Endothelial cell of umbilical vein (primary cell): ENCODE measurements at regions of chr1 and their contacts with region 1.

Region 1: GRCh38 chr1:111755331-111756123 is at the start of gene DDX20:
- DNase-seq: peak; percentile 96
- H3K4me3 ChIP-seq: peak within 1 kb of the TSS; percentile 80 to 91 (median 82)
- H3K27ac ChIP-seq: peak within 1 kb of the TSS; percentile 90
- H3K4me1 ChIP-seq: peaks cover 24% of the 10 kb centered on the region
- H3K27me3 ChIP-seq: no peaks in the 10 kb centered on the region
- CTCF ChIP-seq: peak; percentile 82 to 83
- POLR2A ChIP-seq: peak; percentile 95
- total RNA-seq, gene DDX20: 14.5 and 15.9 TPM in 2 replicates

Region 2: GRCh38 chr1:111448918-111449702 is 306.4 kb before region 1 on chr1 and contains the starts of genes ATP5PB and WDR77:
- CTCF ChIA-PET with region 1: no interaction called
- POLR2A ChIA-PET with region 1: no interaction called
- dilution Hi-C with region 1: no loop called
- intact Hi-C with region 1: loop called (anchors 1 kb)
- DNase-seq: peak; percentile 99
- H3K4me3 ChIP-seq: peak within 1 kb of the TSS; percentile 72 to 96 (median 87)
- H3K27ac ChIP-seq: peak within 1 kb of the TSS; percentile 74
- H3K4me1 ChIP-seq: peaks cover 21% of the 10 kb centered on the region
- H3K27me3 ChIP-seq: no peaks in the 10 kb centered on the region
- CTCF ChIP-seq: no peak
- POLR2A ChIP-seq: peak; percentile 60
- total RNA-seq, gene ATP5PB: 235 and 244 TPM in 2 replicates
- total RNA-seq, gene WDR77: 35.6 and 41.3 TPM in 2 replicates

Region 3: DNA sequence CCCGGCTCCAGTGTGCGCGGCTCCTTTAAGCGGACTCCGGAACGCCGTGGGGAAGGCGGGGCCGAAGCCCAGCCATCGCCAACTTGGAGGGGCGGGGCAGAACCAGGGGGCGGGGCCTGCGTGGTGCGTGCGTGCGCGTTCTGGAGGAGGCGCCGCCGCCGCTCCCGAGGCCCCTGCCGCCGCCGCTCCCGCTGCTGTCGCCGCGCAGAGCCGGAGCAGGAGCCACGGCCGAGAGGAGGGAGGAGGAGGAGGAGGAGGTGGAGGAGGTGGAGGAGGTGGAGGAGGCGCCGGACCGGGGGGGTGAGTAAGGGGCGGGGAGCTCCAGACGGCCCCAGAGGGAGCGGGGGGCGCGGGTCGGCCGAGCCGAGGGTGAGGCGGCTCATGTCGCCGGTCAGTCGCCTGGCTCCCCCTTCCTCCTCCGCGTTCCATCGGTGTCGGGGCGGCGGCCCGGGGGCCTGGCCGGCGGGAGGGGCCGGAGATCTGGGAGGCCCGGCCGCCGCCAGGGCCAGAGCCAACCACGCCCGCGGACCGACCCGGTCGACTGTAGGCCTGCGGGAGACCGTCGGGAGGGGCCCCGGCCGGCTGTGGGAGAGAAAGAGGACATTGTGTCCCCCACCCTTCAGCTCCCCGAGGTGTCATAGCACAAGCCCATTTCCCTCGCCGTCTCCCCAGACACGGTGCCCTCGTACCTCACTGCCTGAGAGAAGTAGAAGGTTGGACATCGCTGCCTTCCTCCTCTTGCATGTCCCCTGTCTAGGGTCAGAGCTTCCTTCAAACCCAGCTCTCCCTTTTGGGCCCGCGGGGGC is 135.7 kb before region 1 on chr1 and contains the start of gene RAP1A:
- CTCF ChIA-PET with region 1: no interaction called
- POLR2A ChIA-PET with region 1: interaction called, 3 read pairs
- dilution Hi-C with region 1: no loop called
- intact Hi-C with region 1: loop called (anchors 1 kb)
- DNase-seq: peak; percentile 93
- H3K4me3 ChIP-seq: peak within 1 kb of the TSS; percentile 37 to 98 (median 84)
- H3K27ac ChIP-seq: peak within 1 kb of the TSS; percentile 52
- H3K4me1 ChIP-seq: peaks cover 12% of the 10 kb centered on the region
- H3K27me3 ChIP-seq: peaks cover 0 to 4% of the 10 kb centered on the region in 2 experiments
- CTCF ChIP-seq: no peak
- POLR2A ChIP-seq: peak; percentile 39
- total RNA-seq, gene RAP1A: 56.4 and 57.1 TPM in 2 replicates

Region 4: GRCh38 chr1:111733183-111733991 is 22.1 kb before region 1 on chr1:
- CTCF ChIA-PET with region 1: interaction called, 14 read pairs
- POLR2A ChIA-PET with region 1: no interaction called
- dilution Hi-C with region 1: no loop called
- intact Hi-C with region 1: loop called (anchors 1 kb)
- DNase-seq: peak; percentile 78
- H3K4me3 ChIP-seq: no peak overlapping the region
- H3K27ac ChIP-seq: peak overlapping the region; percentile 89
- H3K4me1 ChIP-seq: peaks cover 36% of the 10 kb centered on the region
- H3K27me3 ChIP-seq: no peaks in the 10 kb centered on the region
- CTCF ChIP-seq: no peak
- POLR2A ChIP-seq: peak; percentile 41

Region 5: DNA sequence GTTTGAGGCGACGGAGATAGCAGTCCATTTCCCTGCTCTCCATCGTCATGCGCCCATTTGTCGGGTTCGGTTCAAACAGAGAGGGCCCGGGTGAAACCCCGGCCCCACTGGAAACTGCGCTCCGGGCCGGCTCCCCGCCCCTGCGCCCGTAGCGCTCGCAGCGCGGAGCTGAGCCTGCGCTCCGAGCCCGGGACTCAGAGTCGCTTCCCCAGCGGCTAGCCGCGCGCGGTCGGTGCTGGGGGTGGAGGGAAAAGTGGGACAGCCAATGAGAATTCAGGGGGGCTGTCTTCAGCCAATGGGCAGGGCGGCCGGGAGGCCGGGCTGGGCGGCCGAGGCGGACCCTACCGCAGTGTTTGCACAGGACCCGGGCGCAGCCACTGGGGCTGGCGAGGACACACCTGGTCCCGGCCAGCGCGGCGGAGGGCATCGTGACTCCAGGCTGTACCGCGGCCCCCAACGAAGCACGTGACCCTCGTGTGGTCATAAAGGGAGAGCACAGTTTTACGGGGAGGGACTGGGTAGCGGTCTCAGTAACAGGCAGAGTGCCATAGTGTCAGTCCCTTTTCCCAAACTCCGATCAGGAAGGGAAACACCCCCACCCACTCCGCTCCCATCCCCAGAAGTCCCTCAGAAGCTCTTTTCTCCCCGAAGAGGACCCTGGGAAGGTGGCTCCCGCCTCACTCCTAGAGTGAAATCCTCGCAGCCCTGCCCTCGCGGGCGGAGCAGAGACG is 16.2 kb before region 1 on chr1 and contains the start of gene INKA2:
- CTCF ChIA-PET with region 1: interaction called, 14 read pairs
- POLR2A ChIA-PET with region 1: no interaction called
- dilution Hi-C with region 1: no loop called
- intact Hi-C with region 1: loop called (anchors 1 kb)
- DNase-seq: peak; percentile 89
- H3K4me3 ChIP-seq: peak within 1 kb of the TSS; percentile 50 to 68 (median 61)
- H3K27ac ChIP-seq: peak within 1 kb of the TSS; percentile 47
- H3K4me1 ChIP-seq: peaks cover 29% of the 10 kb centered on the region
- H3K27me3 ChIP-seq: peaks cover 4 to 6% of the 10 kb centered on the region in 2 experiments
- CTCF ChIP-seq: no peak
- POLR2A ChIP-seq: no peak
- total RNA-seq, gene INKA2: 5.3 and 7.8 TPM in 2 replicates

Region 6: GRCh38 chr1:111769517-111770146 is 14.1 kb after region 1 on chr1:
- CTCF ChIA-PET with region 1: interaction called, 33 read pairs
- POLR2A ChIA-PET with region 1: no interaction called
- dilution Hi-C with region 1: no loop called
- intact Hi-C with region 1: no loop called
- DNase-seq: peak; percentile 70
- H3K4me3 ChIP-seq: no peak overlapping the region
- H3K27ac ChIP-seq: no peak overlapping the region
- H3K4me1 ChIP-seq: no peaks in the 10 kb centered on the region
- H3K27me3 ChIP-seq: no peaks in the 10 kb centered on the region
- CTCF ChIP-seq: peak; percentile 51 to 62
- POLR2A ChIP-seq: peak; percentile 18

Region 7: GRCh38 chr1:111833334-111833733 is 77.8 kb after region 1 on chr1:
- CTCF ChIA-PET with region 1: no interaction called
- POLR2A ChIA-PET with region 1: no interaction called
- dilution Hi-C with region 1: no loop called
- intact Hi-C with region 1: no loop called
- DNase-seq: no peak
- H3K4me3 ChIP-seq: no peak overlapping the region
- H3K27ac ChIP-seq: no peak overlapping the region
- H3K4me1 ChIP-seq: no peaks in the 10 kb centered on the region
- H3K27me3 ChIP-seq: no peaks in the 10 kb centered on the region
- CTCF ChIP-seq: no peak
- POLR2A ChIP-seq: no peak